ENCODE measurements at regions of chrX and their contacts with region 1.

Region 1: DNA sequence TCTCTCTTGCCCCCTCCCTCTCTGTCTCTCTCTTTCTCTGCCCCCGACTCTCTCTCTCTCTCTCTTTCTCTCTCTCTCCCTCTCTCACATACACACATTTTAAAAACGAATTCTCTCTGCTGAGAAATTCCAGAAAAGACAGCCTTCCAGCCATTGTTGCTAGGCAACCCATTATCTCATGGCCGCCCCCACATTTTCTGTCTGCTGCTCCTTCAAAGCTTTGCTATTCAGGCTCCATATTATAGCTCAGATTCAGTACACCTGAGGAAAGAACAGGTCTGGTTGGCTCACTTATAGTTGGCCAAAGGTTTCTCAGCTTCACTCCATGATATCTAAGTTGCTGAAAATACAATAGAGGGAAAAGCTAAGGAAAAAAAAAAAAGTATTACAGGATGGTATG is 174.4 kb upstream of the RADX start:
- DNase-seq: no peak
- ATAC-seq: no peak
- H3K4me3 ChIP-seq: no peak overlapping the region
- H3K27ac ChIP-seq: no peak overlapping the region
- H3K4me1 ChIP-seq: no peaks in the 10 kb centered on the region
- H3K27me3 ChIP-seq: peaks cover 0 to 56% (median 0%) of the 10 kb centered on the region in 7 donors
- CTCF ChIP-seq: no peak

Region 2: DNA sequence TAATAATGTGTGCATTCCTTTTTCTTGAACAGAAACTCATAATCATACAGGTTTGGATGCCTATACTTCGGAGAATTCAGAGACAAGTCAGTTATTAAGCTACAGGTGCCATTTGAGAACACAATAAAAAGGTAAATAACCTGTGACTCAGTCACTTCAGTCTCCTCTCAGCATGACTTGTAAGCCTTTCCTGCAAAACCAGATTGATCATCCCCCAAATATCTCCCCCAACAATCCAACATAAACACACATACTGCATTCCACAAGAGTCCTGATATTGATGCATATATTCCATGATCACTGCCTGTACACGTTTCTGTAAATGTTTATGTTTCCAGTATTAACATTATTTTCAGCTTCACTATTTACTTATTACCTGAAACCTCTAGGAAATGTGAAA is 158.5 kb before region 1 on chrX:
- intact Hi-C with region 1: no loop called
- DNase-seq: no peak
- ATAC-seq: no peak
- H3K4me3 ChIP-seq: no peak overlapping the region
- H3K27ac ChIP-seq: no peak overlapping the region
- H3K4me1 ChIP-seq: no peaks in the 10 kb centered on the region
- H3K27me3 ChIP-seq: peaks cover 0 to 22% (median 0%) of the 10 kb centered on the region in 7 donors
- CTCF ChIP-seq: no peak

Region 3: DNA sequence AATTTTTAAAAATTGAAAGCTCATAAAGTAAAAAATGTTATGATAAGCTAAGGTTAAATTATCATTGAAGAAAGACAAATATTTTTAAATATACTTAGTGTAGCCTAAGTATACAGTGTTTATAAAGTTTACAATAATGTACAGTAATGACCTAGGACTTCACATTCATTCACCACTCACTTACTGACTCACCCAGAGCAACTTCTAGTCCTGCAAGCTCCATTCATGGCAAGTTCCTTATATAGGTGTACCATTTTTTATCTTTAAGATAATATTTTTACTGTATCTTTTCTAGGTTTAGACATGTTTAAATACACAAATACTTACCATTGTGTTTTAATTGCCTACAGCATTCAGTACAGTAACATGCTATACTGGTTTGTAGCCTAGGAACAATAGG is 62.1 kb after region 1 on chrX:
- intact Hi-C with region 1: no loop called
- DNase-seq: no peak
- ATAC-seq: no peak
- H3K4me3 ChIP-seq: no peak overlapping the region
- H3K27ac ChIP-seq: no peak overlapping the region
- H3K4me1 ChIP-seq: no peaks in the 10 kb centered on the region
- H3K27me3 ChIP-seq: peaks cover 0 to 31% (median 0%) of the 10 kb centered on the region in 7 donors
- CTCF ChIP-seq: no peak

Region 4: GRCh38 chrX:106599411-106599810 is 162.0 kb after region 1 on chrX:
- intact Hi-C with region 1: loop called in 1 of 10 experiments (anchors 5 kb)
- DNase-seq: no peak
- ATAC-seq: no peak
- H3K4me3 ChIP-seq: no peak overlapping the region
- H3K27ac ChIP-seq: no peak overlapping the region
- H3K4me1 ChIP-seq: no peaks in the 10 kb centered on the region
- H3K27me3 ChIP-seq: peaks cover 0 to 34% (median 0%) of the 10 kb centered on the region in 7 donors
- CTCF ChIP-seq: no peak

Measured in heart right ventricle (tissue), 16 donors.